ENCODE measurements at regions of chr6 and their contacts with region 1.

Region 1: GRCh38 chr6:90458353-90459224 is 128.3 kb downstream of the MAP3K7 start:
- DNase-seq: peak; percentile 93
- ATAC-seq: peak; percentile 95
- H3K4me3 Mint-ChIP-seq: peak overlapping the region; percentile 31
- H3K27ac Mint-ChIP-seq: peak overlapping the region; percentile 93
- H3K4me1 Mint-ChIP-seq: peaks cover 74% of the 10 kb centered on the region
- H3K27me3 Mint-ChIP-seq: no peaks in the 10 kb centered on the region
- CTCF ChIP-seq: no peak

Region 2: DNA sequence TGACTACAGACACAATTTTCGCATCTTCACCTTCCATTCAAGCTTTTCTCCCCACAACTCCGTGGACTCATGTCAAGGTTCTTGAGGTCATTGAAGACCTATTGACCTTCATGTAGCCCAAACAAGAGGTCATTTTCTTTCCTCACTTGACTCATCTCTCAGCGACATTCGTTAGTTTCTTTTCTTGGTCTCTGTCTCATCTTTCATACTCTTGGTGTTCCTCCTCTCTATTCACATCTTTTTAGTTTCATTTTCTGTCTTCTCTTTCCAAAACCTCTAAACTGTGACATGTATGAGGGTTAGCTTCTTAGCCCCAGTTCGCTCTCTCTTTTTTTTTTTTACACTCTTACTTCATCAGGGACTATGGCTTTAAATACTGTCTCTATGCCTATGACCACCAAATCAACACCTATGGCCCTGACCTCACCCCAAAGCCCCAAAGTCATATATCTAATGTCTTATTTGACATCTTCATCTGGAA is 33.4 kb before region 1 on chr6:
- CTCF ChIA-PET with region 1: interaction called, 10 read pairs
- POLR2A ChIA-PET with region 1: interaction called, 11 read pairs
- intact Hi-C with region 1: no loop called
- DNase-seq: peak; percentile 64
- ATAC-seq: peak; percentile 96
- H3K4me3 Mint-ChIP-seq: peak overlapping the region; percentile 52
- H3K27ac Mint-ChIP-seq: peak overlapping the region; percentile 91
- H3K4me1 Mint-ChIP-seq: peaks cover 25% of the 10 kb centered on the region
- H3K27me3 Mint-ChIP-seq: no peaks in the 10 kb centered on the region
- CTCF ChIP-seq: no peak

Region 3: GRCh38 chr6:90472744-90473143 is 14.2 kb after region 1 on chr6:
- CTCF ChIA-PET with region 1: interaction called, 12 read pairs
- POLR2A ChIA-PET with region 1: interaction called, 22 read pairs
- intact Hi-C with region 1: loop called (anchors 2 kb)
- DNase-seq: peak; percentile 64
- ATAC-seq: peak; percentile 18
- H3K4me3 Mint-ChIP-seq: peak overlapping the region; percentile 7
- H3K27ac Mint-ChIP-seq: peak overlapping the region; percentile 88
- H3K4me1 Mint-ChIP-seq: peaks cover 78% of the 10 kb centered on the region
- H3K27me3 Mint-ChIP-seq: no peaks in the 10 kb centered on the region
- CTCF ChIP-seq: no peak

Region 4: DNA sequence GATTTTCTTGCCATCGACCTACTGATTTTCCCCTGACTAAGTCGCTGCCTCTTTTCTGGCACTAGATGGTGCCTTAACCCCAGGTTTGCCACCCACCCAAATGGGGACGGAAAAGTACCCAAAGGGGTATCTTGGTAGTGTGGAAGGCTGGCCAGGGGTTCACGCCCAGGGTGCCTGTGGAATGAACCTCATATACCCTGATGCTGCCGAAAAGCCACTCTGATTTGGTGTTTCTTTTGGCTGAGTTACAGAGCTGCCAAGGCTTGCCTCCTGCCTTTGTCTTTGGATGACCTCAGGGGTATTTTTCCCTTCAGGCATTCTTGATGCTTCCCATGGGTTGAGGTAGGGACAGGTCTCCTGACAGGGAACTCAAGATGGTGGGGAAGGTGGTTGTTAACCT is 50.2 kb after region 1 on chr6:
- CTCF ChIA-PET with region 1: no interaction called
- POLR2A ChIA-PET with region 1: no interaction called
- intact Hi-C with region 1: no loop called
- DNase-seq: no peak
- ATAC-seq: no peak
- H3K4me3 Mint-ChIP-seq: no peak overlapping the region
- H3K27ac Mint-ChIP-seq: no peak overlapping the region
- H3K4me1 Mint-ChIP-seq: no peaks in the 10 kb centered on the region
- H3K27me3 Mint-ChIP-seq: no peaks in the 10 kb centered on the region
- CTCF ChIP-seq: peak; percentile 9